ENCODE measurements at regions of chr19 and their contacts with region 1.

Region 1: DNA sequence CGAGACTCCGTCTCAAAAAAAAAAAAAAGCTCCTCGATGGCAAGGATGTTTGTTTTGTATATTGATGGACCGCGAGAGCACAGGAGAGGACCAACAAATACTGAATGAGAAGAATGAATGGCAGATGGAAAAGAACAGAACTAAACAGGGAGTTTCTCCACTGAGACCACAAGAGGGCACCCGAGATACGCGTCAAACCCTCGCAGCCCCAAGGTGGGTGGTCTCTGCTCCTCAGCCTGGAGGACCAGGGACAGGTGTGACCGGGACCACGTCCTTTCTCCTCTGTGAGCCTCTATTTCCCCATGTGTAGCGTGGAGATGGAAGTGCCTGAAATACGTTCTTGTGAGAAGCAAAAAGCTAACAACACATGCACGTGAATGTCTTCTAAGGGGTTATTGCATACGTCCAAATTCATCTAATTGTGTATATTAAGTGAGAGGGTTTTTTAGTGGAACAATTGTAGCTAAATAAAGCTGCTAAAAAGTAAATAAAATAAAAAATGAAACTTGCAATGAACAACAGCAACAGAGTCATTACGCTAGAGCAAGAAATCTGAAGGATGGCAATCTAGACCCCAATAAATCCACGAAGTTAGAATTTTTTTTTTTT is 8.3 kb upstream of the CDC42EP5 start:
- DNase-seq: peak in 1 of 2 donors; percentile 69
- ATAC-seq: no peak
- H3K4me3 ChIP-seq: no peak overlapping the region
- H3K27ac ChIP-seq: no peak overlapping the region
- H3K4me1 ChIP-seq: no peaks in the 10 kb centered on the region
- H3K27me3 ChIP-seq: peaks cover 0 to 3% of the 10 kb centered on the region in 2 donors

Region 2: GRCh38 chr19:54439174-54439853 is 42.1 kb before region 1 on chr19:
- intact Hi-C with region 1: loop called in 1 of 2 experiments (anchors 5 kb)
- DNase-seq: peak in 1 of 2 donors; percentile 51
- ATAC-seq: no peak
- H3K4me3 ChIP-seq: no peak overlapping the region
- H3K27ac ChIP-seq: no peak overlapping the region
- H3K4me1 ChIP-seq: no peaks in the 10 kb centered on the region
- H3K27me3 ChIP-seq: no peaks in the 10 kb centered on the region

Region 3: DNA sequence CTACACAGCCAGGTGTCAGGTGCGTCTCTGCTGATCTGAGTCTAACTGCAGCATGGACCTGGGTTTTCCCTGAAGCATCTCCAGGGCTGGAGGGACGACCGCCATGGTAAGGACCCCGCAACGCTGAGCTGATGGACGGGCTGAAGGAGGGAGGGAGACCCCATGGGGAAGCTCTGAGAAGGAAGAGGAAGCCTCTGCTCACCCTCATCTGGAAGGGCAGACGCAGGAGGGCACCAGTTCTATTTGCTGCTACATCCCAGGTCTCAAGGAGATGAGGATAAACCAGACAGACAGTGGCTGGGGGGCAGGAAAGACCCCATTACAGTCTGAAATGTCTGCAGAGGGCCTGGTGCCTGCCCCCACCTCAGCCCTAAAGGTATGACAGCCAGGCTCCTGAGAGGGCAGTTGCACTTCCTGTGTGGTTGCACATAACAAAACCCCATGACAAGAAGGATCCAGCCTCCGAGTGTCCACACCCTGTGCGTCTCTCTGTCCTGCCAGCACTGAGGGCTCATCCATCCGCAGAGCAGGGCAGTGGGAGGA is 92.0 kb after region 1 on chr19 and contains the start of gene LILRA2:
- intact Hi-C with region 1: no loop called
- DNase-seq: no peak
- ATAC-seq: peak; percentile 43
- H3K4me3 ChIP-seq: no peak within 1 kb of the TSS
- H3K27ac ChIP-seq: no peak within 1 kb of the TSS
- H3K4me1 ChIP-seq: no peaks in the 10 kb centered on the region
- H3K27me3 ChIP-seq: no peaks in the 10 kb centered on the region
- total RNA-seq, gene LILRA2: 3.5 to 3.7 TPM

Region 4: DNA sequence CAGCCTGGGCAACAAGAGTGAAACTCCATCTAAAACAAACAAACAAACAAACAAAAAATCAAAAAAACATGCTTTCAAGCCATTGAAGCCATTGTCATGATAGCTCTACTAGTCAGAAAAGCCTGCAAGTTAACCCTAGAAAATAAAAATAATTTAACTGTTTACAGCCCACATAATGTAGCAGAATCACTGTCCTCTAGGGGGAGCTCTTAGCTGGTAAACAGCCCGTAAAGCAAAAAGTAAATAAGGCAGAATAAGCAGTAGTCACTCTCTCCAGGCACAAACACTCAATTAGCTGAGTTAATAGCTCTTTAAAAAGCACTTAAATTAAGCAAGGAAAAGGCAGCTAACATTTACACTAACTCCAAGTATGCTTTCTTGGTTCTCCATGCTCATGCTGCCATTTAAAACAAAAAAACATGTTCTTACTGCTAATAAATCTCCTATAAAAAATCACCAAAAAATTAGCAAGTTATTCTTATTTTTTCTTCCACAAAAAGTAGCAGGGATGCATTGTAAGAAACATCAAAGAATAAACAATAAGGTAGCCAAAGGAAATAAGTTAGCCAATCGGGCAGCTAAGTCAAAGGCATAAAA is 192.7 kb after region 1 on chr19:
- intact Hi-C with region 1: loop called in 1 of 2 experiments (anchors 5 kb)
- DNase-seq: no peak
- ATAC-seq: no peak
- H3K4me3 ChIP-seq: no peak overlapping the region
- H3K27ac ChIP-seq: no peak overlapping the region
- H3K4me1 ChIP-seq: no peaks in the 10 kb centered on the region
- H3K27me3 ChIP-seq: no peaks in the 10 kb centered on the region